ENCODE measurements at regions of chr1 and their contacts with region 1.

Region 1: DNA sequence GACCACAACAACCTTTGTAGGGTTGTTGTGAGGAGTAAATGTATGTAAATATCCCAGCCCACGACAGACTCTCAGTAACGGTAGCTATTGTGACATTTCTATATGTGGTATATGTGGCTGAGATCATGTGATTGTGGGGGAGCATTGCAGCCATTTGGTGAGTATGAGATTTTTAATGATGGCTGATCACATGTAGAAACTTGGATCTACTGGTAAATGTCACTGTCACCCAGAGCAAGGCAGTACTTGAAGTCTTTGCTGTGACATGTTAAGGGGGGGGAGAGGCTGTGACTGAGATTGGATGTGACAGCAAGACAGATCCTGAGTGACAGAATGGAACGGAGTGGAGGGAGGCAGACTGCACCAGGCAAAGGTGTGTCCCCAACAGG is 23.9 kb upstream of the MEF2D start:
- DNase-seq: no peak
- H3K4me3 Mint-ChIP-seq: no peak overlapping the region
- H3K27ac Mint-ChIP-seq: peak overlapping the region; percentile 16
- H3K4me1 Mint-ChIP-seq: peaks cover 47% of the 10 kb centered on the region
- H3K27me3 Mint-ChIP-seq: peaks cover 7% of the 10 kb centered on the region

Region 2: DNA sequence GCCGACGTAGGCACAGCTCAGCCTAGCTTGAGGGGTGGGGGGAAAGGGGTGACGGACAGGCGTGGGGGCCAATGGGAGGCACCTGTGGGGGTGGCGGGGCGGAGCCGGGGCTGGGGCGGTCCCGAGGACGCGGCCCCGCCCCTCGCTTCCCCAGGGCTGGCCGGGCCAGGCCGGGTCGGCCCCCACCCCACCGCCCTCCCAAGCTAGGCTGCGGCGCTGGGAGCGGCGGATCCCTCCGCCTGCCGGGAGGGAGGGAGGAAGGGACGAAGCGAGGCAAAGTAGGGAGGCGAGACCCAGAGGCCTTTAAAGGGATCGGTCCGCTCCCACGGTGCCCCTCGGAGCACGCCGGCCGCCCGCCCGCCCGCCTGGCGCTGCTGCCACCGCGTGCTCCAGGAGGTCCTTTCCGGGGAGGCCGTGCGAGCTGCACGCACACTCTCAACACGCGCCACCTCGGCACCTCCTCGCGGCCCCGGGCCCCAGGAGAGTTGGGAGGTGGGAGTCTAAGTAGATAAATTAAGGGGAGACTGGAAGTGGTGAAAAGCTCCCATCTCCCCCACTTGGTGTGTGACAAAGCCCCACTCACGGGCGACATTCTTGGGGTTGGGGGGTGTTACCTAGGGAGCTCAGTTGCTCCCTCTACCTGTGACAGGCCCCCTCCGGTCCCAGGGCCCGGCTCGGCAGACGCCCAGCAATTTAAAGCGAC is 23.5 kb before region 1 on chr1:
- CTCF ChIA-PET with region 1: interaction called, 21 read pairs
- DNase-seq: peak; percentile 93
- H3K4me3 Mint-ChIP-seq: peak overlapping the region; percentile 89
- H3K27ac Mint-ChIP-seq: peak overlapping the region; percentile 98
- H3K4me1 Mint-ChIP-seq: peaks cover 76% of the 10 kb centered on the region
- H3K27me3 Mint-ChIP-seq: peaks cover 5% of the 10 kb centered on the region